ENCODE measurements at regions of chr3 and their contacts with region 1.

Region 1: GRCh38 chr3:149717391-149718056 is 34.8 kb downstream of the COMMD2 start:
- DNase-seq: no peak
- ATAC-seq: peak; percentile 44 to 52

Region 2: GRCh38 chr3:149512209-149512782 is 205.2 kb before region 1 on chr3:
- intact Hi-C with region 1: loop called (anchors 1 to 5 kb)
- DNase-seq: peak; percentile 69
- ATAC-seq: peak; percentile 74 to 81

Region 3: DNA sequence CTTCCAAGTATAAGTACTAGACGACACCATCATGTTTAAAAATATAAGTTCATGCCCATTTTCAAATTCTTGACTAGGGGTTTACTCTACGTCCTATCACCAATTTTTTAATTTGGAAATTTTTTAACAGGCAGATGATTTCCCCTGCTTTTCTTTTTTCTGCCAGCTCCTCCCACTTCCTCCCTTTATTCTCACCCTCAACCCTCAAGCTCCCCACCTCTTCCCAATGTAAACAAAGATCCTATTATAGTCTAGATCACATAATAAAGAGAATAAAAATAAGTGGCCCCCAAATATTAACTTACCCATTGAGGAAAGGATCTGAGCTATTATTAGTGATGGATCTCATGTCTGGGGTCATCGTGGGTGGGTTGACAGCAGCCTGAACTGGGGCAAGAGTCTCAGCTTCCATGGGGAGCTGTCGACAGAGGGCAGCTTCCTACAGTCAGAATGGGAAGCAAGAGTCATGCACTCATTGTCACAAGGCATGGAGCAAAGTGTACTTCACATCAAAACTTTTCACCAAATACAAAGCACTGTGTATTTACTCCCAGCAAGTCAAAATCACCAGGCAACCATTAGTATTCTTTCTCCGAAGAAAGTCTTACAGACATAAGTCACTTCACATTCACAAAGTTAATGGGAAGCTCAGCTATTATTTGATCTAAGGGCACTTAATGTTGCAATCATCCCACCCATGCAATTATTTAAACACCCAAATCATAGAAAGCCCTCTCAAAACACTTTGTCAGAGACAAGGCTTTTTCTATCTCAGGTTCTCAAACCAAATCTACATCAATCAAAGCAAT is 189.8 kb before region 1 on chr3:
- intact Hi-C with region 1: loop called in 1 of 2 experiments (anchors 5 kb)
- DNase-seq: no peak
- ATAC-seq: peak; percentile 48 to 72

Region 4: DNA sequence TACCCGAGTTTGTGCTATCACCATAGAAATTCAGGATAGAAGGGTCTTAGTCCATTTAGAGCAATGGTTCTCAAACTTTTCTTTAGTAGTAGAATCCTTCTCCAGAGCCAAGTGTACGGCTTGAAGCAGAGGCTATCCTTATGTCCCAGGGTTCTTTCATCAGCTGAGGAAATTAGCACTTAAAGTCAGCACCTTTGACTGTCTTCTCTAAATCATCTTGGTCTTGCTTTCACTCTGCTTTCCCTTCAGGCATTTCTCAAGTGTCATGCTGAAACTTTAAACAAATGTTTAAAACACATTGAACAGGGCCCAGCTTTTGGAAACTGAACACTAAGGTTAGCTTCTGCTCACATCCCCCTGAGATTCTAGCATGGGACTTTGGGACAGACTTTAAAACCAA is 164.8 kb before region 1 on chr3:
- intact Hi-C with region 1: loop called in 1 of 2 experiments (anchors 1 kb)
- DNase-seq: no peak
- ATAC-seq: no peak

Measured in left cardiac atrium (tissue), 4 donors.